PC-3 (cell line): ENCODE measurements at regions of chr9 and their contacts with region 1.

Region 1: DNA sequence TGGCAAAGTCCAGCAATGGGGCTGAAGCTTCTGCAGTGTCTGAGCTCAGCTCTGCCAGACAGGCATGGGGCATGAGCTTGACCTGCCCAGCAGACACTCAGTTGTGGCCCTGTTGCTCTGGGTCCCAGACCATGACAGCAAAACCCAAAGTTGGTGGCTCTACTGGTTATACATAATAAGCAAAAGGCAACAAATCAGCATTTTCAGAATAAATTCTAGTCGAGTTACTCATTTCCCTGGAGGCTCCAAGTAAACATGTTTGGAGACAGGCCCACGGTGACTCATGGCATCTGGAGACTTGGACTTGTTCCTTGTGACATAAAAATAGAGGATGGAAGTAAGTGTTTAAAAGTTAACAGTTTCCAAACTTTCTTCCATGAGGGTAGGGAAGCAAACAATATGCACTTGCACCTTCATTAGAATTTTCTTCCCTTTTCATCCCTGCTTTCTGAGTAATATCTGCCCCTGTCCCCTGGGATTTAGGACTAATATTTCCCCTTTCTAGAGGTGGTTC is 60.2 kb upstream of the SLC2A8 start:
- DNase-seq: peak; percentile 96
- ATAC-seq: peak; percentile 92
- H3K4me3 ChIP-seq: peak overlapping the region; percentile 32; the same call in 1 of the 2 replicates
- H3K27ac ChIP-seq: peak overlapping the region; percentile 68
- H3K4me1 ChIP-seq: peaks cover 26% of the 10 kb centered on the region
- H3K27me3 ChIP-seq: no peaks in the 10 kb centered on the region
- CTCF ChIP-seq: no peak

Region 2: DNA sequence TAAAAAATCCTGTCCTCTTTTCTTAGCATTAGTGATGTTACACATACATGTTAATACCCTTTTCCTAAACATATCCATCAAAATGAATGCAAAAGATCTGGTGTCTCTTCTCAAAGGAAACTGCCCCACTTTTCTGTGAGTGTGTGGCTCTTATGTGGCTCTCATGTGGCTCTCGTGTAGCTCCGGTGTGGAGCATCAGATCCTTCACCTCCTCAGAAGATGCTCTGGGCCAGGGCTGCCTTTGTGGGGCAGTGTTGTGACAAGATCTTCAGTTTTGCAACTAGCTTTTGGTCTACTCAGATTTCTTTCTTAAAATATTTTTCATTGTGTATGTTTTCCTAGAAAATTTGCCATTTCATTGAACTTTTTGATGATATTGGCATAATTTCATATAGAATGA is 52.9 kb before region 1 on chr9:
- CTCF ChIA-PET with region 1: interaction called, 4 read pairs
- POLR2A ChIA-PET with region 1: no interaction called
- intact Hi-C with region 1: loop called (anchors 5 kb)
- DNase-seq: peak; percentile 39
- ATAC-seq: peak; percentile 62
- H3K4me3 ChIP-seq: no peak overlapping the region
- H3K27ac ChIP-seq: no peak overlapping the region
- H3K4me1 ChIP-seq: no peaks in the 10 kb centered on the region
- H3K27me3 ChIP-seq: no peaks in the 10 kb centered on the region
- CTCF ChIP-seq: peak; percentile 55

Region 3: DNA sequence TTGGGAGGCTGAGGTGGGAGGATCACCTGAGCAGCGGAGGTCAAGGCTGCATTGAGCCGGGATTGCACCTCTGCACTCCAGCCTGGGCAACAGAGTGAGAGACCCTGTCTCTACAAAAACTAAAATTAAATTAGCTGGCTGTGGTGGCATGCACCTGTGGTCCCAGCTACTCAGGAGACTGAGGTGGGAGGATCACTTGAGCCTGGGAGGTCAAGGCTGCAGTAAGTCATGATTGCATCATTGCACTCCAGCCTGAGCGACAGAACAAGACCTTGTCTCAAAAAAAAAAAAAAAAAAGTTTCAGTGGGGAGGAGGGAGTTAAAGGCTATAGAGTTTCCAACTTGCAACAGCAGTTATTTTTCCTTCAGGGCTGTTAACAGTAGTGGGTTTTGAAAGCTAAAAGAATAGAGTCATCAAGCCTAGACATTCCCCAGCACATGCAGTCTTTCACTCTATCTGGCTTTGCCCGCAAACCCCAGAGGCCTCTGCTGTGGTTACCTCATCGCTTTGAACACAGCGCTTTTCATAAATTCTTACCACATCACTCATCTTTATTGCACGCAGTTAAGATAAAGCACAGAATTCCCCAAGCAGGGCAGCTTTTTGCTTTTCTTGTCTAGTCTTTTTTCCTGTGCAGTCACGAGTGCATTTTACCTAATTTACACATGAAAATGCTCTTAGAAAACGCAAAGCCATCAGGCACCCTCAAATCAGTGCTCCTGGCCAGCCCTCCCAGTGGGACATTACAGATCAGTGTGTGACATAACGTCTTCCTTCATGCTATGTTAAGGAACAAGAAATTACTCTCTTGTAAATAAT is 51.5 kb after region 1 on chr9:
- CTCF ChIA-PET with region 1: no interaction called
- POLR2A ChIA-PET with region 1: no interaction called
- intact Hi-C with region 1: loop called (anchors 10 kb)
- DNase-seq: peak; percentile 92
- ATAC-seq: peak; percentile 99
- H3K4me3 ChIP-seq: peak overlapping the region; percentile 26; the same call in 1 of the 2 replicates
- H3K27ac ChIP-seq: peak overlapping the region; percentile 19; the same call in 1 of the 2 replicates
- H3K4me1 ChIP-seq: peaks cover 16% of the 10 kb centered on the region
- H3K27me3 ChIP-seq: no peaks in the 10 kb centered on the region
- CTCF ChIP-seq: no peak